Dorsolateral prefrontal cortex (tissue), 120 donors: ENCODE measurements at regions of chr6 and their contacts with region 1.

Region 1: DNA sequence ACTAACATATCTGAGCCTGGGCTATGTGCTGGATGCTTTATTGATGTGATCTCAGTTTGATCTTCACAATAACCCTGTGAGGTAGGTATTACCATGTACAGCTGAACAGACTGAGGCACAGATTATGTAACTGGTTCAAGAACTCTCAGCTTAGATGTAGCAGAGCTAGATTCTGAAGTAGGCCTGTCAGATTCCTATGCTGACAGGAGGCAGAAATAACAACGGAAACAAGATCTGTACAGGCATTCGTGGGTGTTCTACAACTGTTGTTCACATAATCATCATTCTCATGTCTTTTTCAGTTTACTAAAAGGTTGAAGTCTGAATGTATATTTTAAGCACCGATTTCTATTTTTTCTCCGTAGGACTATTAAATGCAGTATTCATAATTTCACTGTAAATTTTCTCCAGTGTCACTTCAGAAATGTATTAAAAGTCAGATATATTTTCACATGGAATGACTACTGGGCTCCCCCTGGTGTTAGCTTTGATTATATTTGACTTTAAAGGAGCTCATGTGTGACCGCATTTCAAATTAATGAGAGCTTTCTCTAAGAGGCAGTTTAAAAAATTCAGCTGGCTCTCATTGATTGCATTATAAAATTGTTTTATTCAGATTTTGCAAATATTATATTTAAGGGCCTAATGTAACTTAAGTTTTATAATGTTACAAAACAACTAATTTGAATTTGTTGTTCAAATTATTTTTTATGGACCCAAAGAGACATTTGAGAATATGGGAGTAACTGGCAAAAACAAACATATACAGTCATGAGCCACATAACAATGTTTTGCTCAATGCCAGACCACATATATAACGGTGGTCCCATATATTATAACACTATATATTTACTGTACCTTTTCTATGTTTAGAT is 36.4 kb upstream of the SLC17A4 start:
- DNase-seq: no peak
- H3K4me3 ChIP-seq: no peak overlapping the region
- H3K27ac ChIP-seq: no peak overlapping the region
- H3K27me3 ChIP-seq: no peaks in the 10 kb centered on the region
- CTCF ChIP-seq: peak; percentile 27 to 71 (median 56)

Region 2: DNA sequence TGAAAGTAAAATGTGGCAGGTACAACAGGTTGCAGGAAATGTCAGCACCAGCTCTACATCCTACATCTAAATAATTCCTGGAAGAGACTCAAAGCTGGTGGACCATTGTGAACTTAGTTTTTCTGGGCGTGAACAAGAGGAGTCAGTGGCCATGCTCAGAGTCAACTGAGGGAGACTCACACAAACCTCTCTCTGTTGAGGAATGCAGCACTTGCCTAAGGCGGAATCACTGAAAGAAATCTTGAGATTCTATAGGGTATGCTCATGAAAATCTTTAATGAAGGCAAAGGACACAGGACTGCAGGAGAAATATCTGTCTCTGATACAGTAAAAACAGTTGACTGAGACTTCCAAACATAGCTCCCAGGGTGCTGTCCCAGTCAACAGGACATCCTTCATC is 58.9 kb after region 1 on chr6:
- intact Hi-C with region 1: no loop called
- DNase-seq: no peak
- H3K4me3 ChIP-seq: no peak overlapping the region
- H3K27ac ChIP-seq: no peak overlapping the region
- H3K27me3 ChIP-seq: peaks cover 0 to 23% (median 0%) of the 10 kb centered on the region in 45 donors
- CTCF ChIP-seq: no peak

Region 3: DNA sequence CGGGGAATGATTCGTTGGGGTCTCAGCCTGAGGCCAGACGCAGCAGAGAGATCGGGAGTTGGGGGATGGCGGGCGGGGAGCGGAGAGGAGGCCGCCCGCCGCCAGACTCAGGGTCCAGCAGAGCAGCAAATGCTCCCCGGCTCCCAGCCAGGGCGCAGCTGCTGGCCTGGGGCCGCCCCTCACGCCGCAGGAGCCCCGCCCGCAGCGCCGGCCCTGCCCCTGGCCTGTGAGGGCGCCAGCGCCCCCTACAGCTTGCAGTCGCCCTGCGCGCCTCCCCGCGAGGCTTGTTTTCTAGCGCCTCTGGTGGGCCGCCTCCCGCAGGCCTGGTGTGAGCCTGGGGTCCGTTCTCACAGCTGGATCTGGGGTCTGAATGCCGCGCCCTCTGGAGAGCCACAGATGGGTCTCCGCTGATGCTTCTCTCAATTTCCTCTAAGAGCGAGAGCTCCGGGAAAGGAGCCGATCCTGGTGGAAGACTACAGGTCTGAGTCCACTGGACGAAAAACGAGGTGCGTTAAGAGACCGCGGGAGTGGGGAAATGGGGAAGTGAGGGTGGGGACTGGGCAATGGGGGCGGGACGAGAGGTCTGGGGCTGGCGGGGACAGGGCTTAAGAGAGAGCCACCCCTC is 274.4 kb after region 1 on chr6:
- intact Hi-C with region 1: loop called in 1 of 2 experiments (anchors 5 kb)
- DNase-seq: peak; percentile 81 to 94 (median 88)
- H3K4me3 ChIP-seq: peak overlapping the region; percentile 43 to 92 (median 68)
- H3K27ac ChIP-seq: peak overlapping the region; percentile 11 to 96 (median 86)
- H3K27me3 ChIP-seq: no peaks in the 10 kb centered on the region
- CTCF ChIP-seq: peak; percentile 86 to 99 (median 96)